Right ventricle myocardium inferior (tissue), 1 donor: ENCODE measurements at regions of chr13 and their contacts with region 1.

Region 1: GRCh38 chr13:102089177-102089576 is 312.7 kb downstream of the FGF14 start:
- DNase-seq: no peak
- ATAC-seq: no peak

Region 2: GRCh38 chr13:101949681-101950080 is 139.5 kb before region 1 on chr13:
- intact Hi-C with region 1: loop called (anchors 5 kb)
- DNase-seq: no peak
- ATAC-seq: no peak

Region 3: GRCh38 chr13:102012299-102013293 is 76.6 kb before region 1 on chr13:
- intact Hi-C with region 1: loop called (anchors 1 kb)
- DNase-seq: peak; percentile 68
- ATAC-seq: peak; percentile 97

Region 4: GRCh38 chr13:102261809-102262208 is 172.6 kb after region 1 on chr13:
- intact Hi-C with region 1: no loop called
- DNase-seq: no peak
- ATAC-seq: no peak